ENCODE measurements at regions of chr11 and their contacts with region 1.

Region 1: DNA sequence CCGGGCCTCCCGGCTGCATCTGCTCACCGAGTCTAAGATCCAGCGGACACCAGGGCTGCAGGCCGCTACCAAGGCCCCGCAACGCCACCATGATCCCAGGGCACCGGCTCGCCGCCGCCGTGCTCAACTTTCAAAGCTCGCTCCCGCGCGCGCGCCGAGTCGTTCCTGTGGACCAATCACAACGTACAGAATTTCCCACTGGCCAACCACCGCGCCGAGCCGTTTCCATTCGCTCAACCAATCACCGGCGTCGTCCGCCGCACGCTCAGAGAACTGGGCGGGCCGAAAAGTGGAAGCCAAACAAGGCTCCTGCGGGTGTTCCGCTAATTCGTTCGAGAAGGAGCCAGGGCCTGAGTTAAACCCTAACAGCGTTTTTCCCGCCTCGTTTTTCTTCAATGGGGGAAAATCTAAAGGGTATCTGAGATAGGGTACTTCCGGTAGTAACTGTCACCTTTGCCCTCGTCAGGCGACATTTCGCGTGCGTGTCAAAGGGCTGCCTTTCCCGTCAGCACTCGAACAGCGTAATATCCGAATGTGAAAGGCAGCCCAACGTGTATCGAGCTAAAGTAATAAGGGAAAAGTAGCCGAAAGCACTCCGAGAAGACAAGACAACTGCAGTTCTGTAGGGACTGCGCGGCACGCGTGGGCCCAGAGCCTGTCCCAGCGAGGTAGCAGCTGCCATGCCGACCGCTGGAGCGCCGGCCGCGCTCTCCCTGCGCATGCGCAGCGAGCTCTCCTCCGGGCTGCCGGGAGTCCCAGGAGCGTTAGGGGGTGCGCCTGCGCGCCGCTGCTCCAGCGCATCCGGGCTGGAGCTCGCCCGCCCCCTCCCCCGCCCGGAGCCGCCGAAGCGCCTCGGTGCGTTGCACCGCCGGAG is at the starts of genes NCAPD3 and VPS26B:
- DNase-seq: peak; percentile 99
- H3K4me3 Mint-ChIP-seq: peak within 1 kb of the TSS; percentile 97
- H3K27ac Mint-ChIP-seq: peak within 1 kb of the TSS; percentile 98
- H3K4me1 Mint-ChIP-seq: peaks cover 64% of the 10 kb centered on the region
- H3K27me3 Mint-ChIP-seq: no peaks in the 10 kb centered on the region
- total RNA-seq, gene NCAPD3: 108 and 111 TPM in 2 replicates
- total RNA-seq, gene VPS26B: 41.6 and 42.6 TPM in 2 replicates

Region 2: DNA sequence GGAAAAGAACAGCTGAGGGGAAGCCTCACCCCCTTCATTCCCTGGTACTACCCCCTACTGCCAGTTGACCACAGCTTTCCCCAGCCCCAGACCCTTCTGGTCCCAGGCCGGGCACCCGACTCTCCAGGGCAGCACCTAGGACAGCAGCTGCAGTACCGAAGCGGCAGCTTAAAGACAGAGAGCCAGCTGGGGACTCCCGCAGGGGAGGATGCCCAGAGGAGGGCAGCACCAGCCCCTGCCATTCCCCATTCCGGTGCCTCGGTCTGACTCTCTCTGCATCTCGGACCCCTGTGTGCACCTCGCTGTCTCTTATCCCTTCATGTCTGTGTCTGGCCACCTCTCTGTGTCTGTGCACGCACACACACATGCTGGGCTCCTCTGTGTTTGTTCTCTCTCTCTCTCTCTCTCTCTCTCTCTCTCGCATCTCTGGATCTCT is 276.7 kb before region 1 on chr11:
- intact Hi-C with region 1: loop called (anchors 5 kb)
- DNase-seq: peak; percentile 92
- H3K4me3 Mint-ChIP-seq: peak overlapping the region; percentile 88
- H3K27ac Mint-ChIP-seq: peak overlapping the region; percentile 97
- H3K4me1 Mint-ChIP-seq: peaks cover 75% of the 10 kb centered on the region
- H3K27me3 Mint-ChIP-seq: no peaks in the 10 kb centered on the region

Region 3: DNA sequence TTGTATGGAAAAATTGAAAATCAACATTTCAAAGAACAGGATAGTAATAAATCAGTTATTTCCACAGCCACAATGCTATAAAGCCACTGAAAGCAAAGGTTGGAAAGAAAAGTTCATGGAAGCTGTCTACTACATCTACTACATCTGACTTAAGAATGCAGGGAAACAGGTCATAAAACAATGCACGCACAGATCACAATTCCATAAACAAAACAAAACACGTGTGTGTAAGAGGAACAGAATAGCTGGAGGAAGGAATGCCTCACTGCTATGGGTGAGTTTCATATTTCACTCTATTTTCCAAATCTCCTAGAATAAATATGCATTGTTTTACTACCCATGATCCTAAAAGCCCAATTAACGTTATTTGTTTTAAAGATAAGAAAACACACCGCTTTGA is 66.6 kb before region 1 on chr11:
- intact Hi-C with region 1: no loop called
- DNase-seq: no peak
- H3K4me3 Mint-ChIP-seq: no peak overlapping the region
- H3K27ac Mint-ChIP-seq: no peak overlapping the region
- H3K4me1 Mint-ChIP-seq: no peaks in the 10 kb centered on the region
- H3K27me3 Mint-ChIP-seq: no peaks in the 10 kb centered on the region

Region 4: DNA sequence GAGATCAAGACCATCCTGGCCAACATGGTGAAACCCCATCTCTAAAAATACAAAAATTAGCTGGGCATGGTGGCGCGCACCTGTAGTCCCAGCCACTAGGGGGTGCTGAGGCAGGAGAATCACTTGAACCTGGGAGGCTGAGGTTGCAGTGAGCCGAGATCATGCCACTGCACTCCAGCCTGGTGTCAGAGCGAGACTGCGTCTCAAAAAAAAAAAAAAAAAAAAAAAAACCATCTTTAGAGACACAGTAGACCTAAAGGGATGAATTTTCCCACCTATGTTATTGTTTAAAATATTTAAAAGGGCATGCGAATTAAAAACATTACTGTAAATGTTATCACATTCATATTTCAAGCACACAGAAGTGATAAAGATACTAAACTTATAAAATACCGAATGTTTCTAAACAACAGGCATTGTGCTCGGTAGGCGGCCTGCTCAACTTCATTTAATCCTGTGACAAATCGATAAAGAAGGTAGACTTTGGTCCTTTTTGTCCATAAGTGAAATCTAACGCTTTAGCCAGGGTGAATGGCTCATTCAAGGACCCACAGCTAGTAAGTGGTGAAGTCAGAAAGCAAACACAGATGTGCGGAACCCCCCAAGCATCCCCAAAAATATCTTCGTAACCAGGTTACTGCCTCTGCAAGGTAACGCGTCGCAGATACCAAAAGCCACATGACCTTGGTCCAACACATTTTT is 16.4 kb before region 1 on chr11:
- intact Hi-C with region 1: loop called (anchors 2 kb)
- DNase-seq: peak; percentile 91
- H3K4me3 Mint-ChIP-seq: no peak overlapping the region
- H3K27ac Mint-ChIP-seq: no peak overlapping the region
- H3K4me1 Mint-ChIP-seq: peaks cover 11% of the 10 kb centered on the region
- H3K27me3 Mint-ChIP-seq: no peaks in the 10 kb centered on the region

Region 5: GRCh38 chr11:134275534-134276395 is 51.7 kb after region 1 on chr11 and contains the start of gene GLB1L3:
- intact Hi-C with region 1: loop called (anchors 1 kb)
- DNase-seq: peak; percentile 96
- H3K4me3 Mint-ChIP-seq: peak within 1 kb of the TSS; percentile 98
- H3K27ac Mint-ChIP-seq: peak within 1 kb of the TSS; percentile 93
- H3K4me1 Mint-ChIP-seq: peaks cover 46% of the 10 kb centered on the region
- H3K27me3 Mint-ChIP-seq: peaks cover 3% of the 10 kb centered on the region
- total RNA-seq, gene GLB1L3: 16.5 and 17.0 TPM in 2 replicates